GM10248 (cell line): ENCODE measurements at regions of chr2 and their contacts with region 1.

Region 1: GRCh38 chr2:84925724-84926376 is 20.4 kb downstream of the TMSB10 start:
- DNase-seq: peak; percentile 84
- CTCF ChIP-seq: peak; percentile 99

Region 2: GRCh38 chr2:84881581-84882414 is 44.1 kb before region 1 on chr2:
- CTCF ChIA-PET with region 1: interaction called, 26 read pairs
- POLR2A ChIA-PET with region 1: no interaction called
- DNase-seq: peak; percentile 73
- CTCF ChIP-seq: peak; percentile 69

Region 3: DNA sequence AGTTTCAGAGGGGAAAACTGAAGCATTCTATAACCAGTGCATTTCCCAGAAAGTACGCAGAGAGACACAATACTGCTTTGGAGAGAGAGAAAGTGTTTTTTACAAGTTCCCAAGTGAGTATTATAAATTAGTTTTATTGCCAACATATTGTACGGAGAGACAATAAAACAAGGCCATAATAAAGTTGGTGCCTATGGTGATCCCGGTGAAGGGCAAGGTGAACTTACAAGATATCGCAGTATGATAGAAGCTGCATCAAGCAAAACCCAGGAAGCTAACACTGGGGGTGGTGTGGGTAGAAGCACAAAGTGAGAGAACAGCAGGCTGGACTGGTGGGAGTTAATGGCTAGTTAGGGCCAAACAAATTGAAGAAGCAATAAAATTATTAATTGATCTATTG is 12.9 kb before region 1 on chr2:
- CTCF ChIA-PET with region 1: interaction called, 112 read pairs
- POLR2A ChIA-PET with region 1: interaction called, 20 read pairs
- DNase-seq: no peak
- CTCF ChIP-seq: no peak

Region 4: GRCh38 chr2:84970868-84971509 is 45.1 kb after region 1 on chr2 and contains the start of gene KCMF1:
- CTCF ChIA-PET with region 1: interaction called, 45 read pairs
- POLR2A ChIA-PET with region 1: no interaction called
- DNase-seq: peak; percentile 88
- CTCF ChIP-seq: no peak

Region 5: DNA sequence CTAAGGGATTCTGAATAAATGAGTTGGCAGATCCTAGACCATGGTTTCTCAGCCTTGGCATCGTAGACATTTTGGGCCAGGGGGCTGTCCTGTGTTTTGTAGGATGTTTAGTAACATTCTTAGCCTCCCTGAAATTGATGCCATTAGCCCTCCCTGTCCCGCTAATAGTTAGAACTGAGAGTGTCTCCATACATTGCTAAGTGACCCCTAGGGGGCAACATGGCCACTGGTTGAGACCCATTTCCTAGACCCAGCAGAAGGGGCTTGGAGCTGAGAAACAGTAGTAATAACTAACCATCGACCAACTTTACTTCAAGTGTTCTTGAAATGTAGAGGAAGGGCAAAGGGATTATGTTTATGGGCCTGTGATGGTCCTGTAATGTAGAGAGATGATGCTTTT is 85.9 kb after region 1 on chr2:
- CTCF ChIA-PET with region 1: interaction called, 10 read pairs
- POLR2A ChIA-PET with region 1: no interaction called
- DNase-seq: no peak
- CTCF ChIP-seq: no peak

Region 6: DNA sequence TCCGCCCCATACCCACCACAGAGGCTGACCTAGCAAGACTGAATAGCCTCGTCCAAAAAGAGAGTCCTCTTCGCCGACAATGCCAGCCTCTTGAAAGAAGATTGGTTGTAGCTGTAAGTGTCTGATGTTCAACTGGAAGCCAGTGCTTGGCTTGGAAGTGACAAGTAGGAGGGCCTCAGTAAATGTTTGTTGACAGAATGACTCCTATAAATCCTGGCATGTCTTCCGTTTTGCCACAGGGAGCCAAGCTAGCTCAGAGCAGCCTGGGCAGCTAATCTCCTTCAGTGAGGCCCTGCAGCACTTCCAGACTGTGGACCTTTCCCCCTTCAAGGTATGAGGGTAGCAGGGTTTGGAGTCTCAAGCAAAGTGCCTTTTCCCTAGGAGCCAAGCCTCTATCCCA is 443.6 kb after region 1 on chr2:
- CTCF ChIA-PET with region 1: no interaction called
- POLR2A ChIA-PET with region 1: no interaction called
- DNase-seq: no peak
- CTCF ChIP-seq: no peak